Common myeloid progenitor, CD34-positive (primary cell): ENCODE measurements at regions of chr2 and their contacts with region 1.

Region 1: GRCh38 chr2:70301344-70302194 is at the start of gene FAM136A:
- DNase-seq: peak; percentile 83 to 90 (median 89)
- H3K4me3 ChIP-seq: peak within 1 kb of the TSS; percentile 67 to 93 (median 79)
- H3K27ac ChIP-seq: peak within 1 kb of the TSS; percentile 33 to 65
- H3K4me1 ChIP-seq: peaks cover 0 to 13% (median 11%) of the 10 kb centered on the region in 4 experiments
- H3K27me3 ChIP-seq: no peaks in the 10 kb centered on the region

Region 2: DNA sequence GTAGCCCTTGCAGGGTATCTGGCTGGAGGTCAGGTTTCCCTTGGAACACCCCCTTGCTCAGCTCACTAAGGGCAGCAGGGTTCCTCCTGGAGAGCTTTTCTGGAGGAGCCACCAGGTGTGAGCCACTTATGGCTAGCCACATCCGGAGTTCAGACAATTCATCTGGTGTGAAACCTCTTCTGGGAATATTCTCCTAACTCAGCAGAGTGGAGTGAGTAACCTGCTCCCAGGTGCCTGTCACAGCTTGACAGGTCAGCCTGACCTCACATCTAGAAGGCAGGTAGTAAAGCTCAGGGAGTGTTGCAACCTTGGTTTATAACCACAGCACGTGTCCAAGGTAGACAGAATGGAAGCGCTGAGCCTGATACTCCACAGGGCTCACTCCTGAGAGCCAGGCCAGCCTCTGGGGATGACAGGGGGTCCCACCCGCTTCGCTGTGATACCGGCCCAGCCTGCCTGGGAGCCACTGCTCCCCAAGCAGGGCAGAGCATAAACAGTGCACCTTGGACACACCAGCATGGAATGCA is 314.7 kb after region 1 on chr2:
- CTCF ChIA-PET with region 1: interaction called, 36 read pairs
- POLR2A ChIA-PET with region 1: no interaction called
- DNase-seq: no peak
- H3K4me3 ChIP-seq: no peak overlapping the region
- H3K27ac ChIP-seq: no peak overlapping the region
- H3K4me1 ChIP-seq: no peaks in the 10 kb centered on the region
- H3K27me3 ChIP-seq: peaks cover 0 to 10% (median 3%) of the 10 kb centered on the region in 5 experiments

Region 3: DNA sequence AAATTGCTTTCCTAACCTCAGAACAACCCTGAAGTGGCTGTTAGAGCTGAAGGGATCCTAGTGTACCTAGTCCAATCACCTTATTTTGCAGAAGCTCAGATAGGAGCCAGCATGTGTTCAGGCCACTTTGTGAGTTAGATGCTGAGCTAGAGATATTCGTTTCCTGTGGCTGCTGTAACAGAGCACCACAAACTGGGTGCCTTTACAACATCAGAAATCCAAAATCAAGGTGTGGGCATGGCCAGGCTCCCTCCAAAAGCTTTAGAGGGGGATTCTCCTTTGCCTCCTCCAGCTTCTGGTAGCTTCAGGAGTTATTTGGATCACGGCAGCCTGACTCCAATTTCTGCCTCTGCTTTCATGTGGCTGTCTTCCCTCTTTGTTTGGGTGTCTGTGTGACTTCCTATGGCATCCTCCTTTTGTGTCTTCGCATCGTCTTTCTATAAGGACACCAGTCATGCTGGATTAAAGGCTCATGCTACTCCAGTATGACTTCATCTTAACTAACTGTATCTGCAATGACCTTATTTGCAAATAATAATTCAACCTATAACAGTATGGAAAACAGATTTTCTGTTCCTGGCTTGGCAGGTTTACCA is 338.4 kb after region 1 on chr2:
- CTCF ChIA-PET with region 1: interaction called, 132 read pairs
- POLR2A ChIA-PET with region 1: no interaction called
- DNase-seq: no peak
- H3K4me3 ChIP-seq: no peak overlapping the region
- H3K27ac ChIP-seq: no peak overlapping the region
- H3K4me1 ChIP-seq: no peaks in the 10 kb centered on the region
- H3K27me3 ChIP-seq: peaks cover 0 to 5% (median 0%) of the 10 kb centered on the region in 5 experiments

Region 4: DNA sequence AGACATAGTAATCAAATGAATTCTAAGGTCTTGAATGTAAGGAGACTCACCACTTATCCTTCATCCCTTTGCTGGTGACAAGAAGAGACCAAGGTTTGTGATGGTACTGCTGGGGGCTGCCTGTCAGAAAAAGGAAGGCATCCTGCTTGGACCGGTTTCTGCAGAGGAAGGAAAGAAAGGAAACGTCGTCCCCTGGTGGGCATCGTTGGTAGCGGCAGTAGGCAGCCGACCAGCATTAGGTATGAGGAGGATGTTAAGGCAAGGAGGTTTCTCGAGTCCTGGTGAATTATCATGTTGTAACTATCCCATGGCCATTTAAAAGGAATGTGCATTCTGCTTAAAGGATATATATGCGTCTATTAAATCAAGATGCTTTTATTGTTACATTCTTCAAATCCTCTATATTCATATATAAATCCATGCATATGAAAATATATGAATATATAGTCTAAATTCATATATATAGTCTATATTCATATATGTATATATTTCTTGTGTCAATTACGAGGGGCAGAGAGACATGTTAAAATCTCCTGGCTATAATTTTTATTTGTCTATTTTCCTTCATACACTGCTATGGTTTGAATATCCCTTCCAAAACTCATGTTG is 346.4 kb after region 1 on chr2:
- CTCF ChIA-PET with region 1: interaction called, 132 read pairs
- POLR2A ChIA-PET with region 1: no interaction called
- DNase-seq: peak; percentile 69 to 84 (median 76)
- H3K4me3 ChIP-seq: no peak overlapping the region
- H3K27ac ChIP-seq: no peak overlapping the region
- H3K4me1 ChIP-seq: no peaks in the 10 kb centered on the region
- H3K27me3 ChIP-seq: peaks cover 0 to 5% (median 3%) of the 10 kb centered on the region in 5 experiments